ENCODE measurements at regions of chr4 and their contacts with region 1.

Region 1: DNA sequence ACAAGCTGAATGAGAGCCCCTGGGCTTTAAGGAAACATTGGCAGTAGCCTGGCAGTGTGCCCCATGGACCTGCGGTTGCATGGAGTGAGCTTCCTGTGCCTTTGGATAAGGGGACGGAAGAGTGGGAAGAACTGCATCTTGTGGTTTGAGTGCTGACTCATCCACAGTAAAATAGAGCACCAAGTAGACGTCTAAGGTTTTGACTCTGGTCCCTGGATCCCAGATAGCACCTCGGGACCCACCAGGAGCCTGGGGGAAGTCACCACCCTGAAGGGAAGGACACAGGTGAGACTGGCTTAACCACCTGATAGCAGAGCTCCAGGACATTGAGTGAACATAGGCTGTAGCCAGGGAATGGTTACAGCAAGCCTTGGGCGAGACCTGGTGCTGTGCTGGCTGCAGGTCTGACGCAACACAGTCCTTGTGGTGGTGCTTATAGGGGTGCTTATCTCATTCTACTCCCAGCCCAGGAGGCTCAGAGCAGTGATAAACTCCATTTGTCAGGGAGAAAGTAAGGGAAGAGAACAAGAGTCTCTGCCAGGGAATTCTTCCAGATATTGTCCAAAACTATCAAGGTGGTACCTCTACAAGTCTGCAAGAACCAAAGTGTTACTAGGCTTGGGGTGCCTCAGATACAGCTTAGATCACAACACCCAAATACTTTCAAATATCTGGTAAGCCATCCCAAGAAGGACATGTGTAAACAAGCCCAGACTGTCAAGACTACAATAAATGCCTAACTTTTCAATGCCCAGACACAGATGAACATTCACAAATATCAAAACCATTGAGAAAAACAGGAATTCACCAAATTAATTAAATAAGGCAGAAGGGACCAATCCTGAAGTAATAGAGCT is 123.6 kb upstream of the TET2 start:
- DNase-seq: no peak
- ATAC-seq: no peak
- H3K4me3 ChIP-seq: no peak overlapping the region
- H3K27ac ChIP-seq: no peak overlapping the region
- H3K4me1 ChIP-seq: peaks cover 0 to 9% (median 0%) of the 10 kb centered on the region in 9 donors
- H3K27me3 ChIP-seq: no peaks in the 10 kb centered on the region
- CTCF ChIP-seq: no peak

Region 2: GRCh38 chr4:103867311-103867710 is 1155.7 kb before region 1 on chr4:
- intact Hi-C with region 1: loop called in 1 of 10 experiments (anchors 10 kb)
- DNase-seq: no peak
- ATAC-seq: no peak
- H3K4me3 ChIP-seq: no peak overlapping the region
- H3K27ac ChIP-seq: no peak overlapping the region
- H3K4me1 ChIP-seq: no peaks in the 10 kb centered on the region
- H3K27me3 ChIP-seq: no peaks in the 10 kb centered on the region
- CTCF ChIP-seq: no peak

Region 3: GRCh38 chr4:105061136-105061696 is 38.2 kb after region 1 on chr4:
- intact Hi-C with region 1: no loop called
- DNase-seq: peak in 1 of 2 donors; percentile 10
- ATAC-seq: peak in 6 of 8 donors; percentile 43 to 78 (median 61)
- H3K4me3 ChIP-seq: no peak overlapping the region
- H3K27ac ChIP-seq: peak overlapping the region in 4 of 10 donors; percentile 31 to 88 (median 38)
- H3K4me1 ChIP-seq: peaks cover 0 to 49% (median 7%) of the 10 kb centered on the region in 9 donors
- H3K27me3 ChIP-seq: no peaks in the 10 kb centered on the region
- CTCF ChIP-seq: no peak